AG04449 (cell line): ENCODE measurements at regions of chr12 and their contacts with region 1.

Region 1: DNA sequence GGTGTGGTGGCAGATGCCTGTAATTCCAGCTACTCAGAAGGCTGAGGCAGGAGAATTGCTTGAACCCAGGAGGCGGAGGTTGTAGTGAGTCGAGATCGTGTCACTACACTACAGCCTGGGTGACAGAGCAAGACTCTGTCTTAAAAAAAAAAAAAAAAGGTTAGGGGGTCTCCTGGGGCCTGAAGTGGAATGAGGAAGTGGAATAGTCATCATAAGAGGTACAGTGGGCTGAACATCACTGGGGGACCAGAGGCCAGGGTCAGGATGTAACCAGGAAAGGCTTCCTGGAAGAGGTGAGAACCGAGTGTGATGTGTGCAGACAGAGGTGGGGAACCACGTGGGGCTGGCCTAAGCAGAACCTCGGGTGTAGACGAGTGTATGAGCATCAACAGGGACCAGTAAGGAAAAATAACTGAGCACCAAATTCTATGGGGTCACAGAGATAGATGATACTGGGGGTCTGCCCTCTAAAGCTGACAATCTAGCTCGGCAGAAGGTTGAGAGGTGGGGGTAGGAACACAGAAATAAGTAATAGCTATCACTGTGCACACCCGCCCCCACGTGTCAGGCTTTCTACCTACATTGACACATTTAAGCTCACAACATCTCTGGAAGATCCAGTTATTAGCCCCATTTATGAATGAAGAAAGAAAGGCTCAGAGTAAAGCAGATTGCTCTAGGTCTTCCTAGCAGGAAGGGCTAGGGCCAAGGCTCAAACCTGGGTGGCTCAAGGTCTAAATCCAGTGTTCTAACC is 5.0 kb upstream of the COX6A1 start:
- DNase-seq: no peak
- H3K4me3 ChIP-seq: no peak overlapping the region
- CTCF ChIP-seq: no peak

Region 2: DNA sequence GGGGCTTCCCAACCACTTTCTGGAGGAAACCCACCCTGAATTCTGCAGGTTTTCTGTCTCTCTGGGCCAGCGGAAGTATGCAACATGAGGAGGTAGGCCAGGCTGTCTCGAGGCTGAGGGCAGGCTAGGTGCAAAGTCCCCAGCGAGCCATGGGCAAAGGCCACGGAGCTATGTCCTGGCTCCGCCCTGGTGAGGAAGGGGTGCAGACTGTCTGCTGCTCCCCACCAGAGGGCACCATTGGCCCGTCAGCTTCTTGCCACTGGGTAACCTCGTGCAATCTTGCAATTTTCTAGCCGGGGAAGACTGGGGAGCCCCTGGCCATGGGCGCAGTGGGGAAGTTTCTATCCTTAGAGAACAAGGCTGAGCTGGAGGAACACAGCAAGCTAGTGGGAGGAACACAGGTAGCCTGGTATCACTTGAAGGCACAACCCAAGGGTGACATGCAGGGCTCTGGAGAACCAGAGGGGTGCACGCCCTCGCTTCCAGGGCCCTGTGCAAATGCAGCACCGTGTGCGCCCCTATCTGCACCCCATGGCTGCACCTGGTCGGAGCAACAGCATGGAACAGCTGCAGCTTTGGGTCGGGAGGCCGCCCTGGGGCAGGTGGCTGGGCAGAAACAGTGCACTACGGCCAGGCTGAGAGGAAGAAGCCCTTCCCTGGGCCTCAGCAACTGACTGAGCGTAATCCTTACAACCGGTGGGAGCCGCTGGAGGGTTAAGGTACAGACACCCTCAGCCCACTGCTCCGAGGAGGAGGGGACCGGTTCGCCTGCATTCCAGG is 204.5 kb before region 1 on chr12:
- CTCF ChIA-PET with region 1: no interaction called
- POLR2A ChIA-PET with region 1: no interaction called
- DNase-seq: no peak
- H3K4me3 ChIP-seq: peak overlapping the region; percentile 4; the same call in 1 of the 2 replicates
- CTCF ChIP-seq: peak; percentile 94

Region 3: DNA sequence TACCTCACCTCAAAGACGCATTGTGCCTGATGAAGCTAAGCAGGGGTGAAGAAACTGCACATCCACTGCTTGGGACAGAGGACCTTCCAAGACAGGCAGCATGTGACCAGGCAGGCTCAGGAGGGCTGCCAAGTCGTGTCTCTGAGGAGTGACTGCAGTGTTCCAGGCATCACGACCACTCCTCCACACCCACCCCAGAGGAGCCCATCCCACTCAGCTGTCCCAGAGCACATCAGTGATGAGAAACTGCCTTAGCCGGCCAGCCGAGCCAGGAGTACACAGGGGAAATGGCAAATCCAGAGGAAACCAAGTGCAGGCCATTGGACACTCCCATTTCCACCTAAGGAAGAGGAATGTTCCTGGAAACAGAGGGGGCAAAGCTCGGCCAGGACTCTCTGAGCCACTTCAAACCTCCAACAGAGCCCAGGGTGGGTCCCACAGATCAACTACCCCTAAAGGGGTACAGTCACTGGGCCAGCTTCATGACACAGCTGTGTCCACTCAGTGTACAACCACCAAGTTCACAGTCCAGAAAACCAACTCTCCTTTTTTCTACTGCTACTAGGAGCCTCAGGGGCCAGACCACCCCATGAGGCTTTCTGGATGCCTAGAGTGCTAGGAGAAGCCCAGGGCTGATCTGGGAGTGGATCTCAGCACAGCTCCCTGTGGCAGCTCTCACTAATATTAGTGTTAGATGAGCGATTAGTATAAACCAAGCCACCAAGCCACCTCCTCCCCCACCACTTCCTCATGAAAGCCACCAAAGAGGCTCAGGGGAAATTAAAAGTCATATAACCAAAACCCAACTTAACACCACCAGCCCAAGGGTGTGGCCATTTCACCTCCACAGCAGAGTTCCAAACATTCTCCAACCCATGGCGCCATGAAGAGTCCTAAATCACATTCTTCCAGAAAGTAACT is 182.8 kb before region 1 on chr12:
- CTCF ChIA-PET with region 1: no interaction called
- POLR2A ChIA-PET with region 1: no interaction called
- DNase-seq: no peak
- H3K4me3 ChIP-seq: no peak overlapping the region
- CTCF ChIP-seq: no peak

Region 4: DNA sequence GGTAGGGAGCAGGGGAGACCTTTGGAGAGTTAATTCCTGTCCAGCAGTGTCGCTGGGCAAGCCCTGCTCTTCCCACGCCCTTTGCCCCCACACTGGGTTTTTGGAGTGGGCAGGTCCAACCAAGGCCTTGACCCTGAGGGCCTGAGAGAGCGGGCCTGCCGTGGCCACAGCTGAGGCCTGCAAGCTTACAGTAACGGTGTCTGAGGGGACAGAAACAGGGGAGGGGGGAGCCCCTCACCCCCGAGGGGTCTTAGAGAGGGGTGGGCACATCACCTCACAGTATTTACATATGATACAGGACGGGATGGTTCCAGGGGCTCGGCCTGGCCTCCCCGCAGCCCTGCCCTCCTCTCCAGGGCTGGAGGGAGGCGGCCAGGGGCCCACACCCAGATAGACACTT is 90.8 kb before region 1 on chr12:
- CTCF ChIA-PET with region 1: interaction called, 19 read pairs
- POLR2A ChIA-PET with region 1: no interaction called
- DNase-seq: no peak
- H3K4me3 ChIP-seq: no peak overlapping the region
- CTCF ChIP-seq: no peak

Region 5: GRCh38 chr12:120367233-120367923 is 65.6 kb before region 1 on chr12:
- CTCF ChIA-PET with region 1: interaction called, 160 read pairs
- POLR2A ChIA-PET with region 1: interaction called, 3 read pairs
- DNase-seq: no peak
- H3K4me3 ChIP-seq: no peak overlapping the region
- CTCF ChIP-seq: peak; percentile 19

Region 6: GRCh38 chr12:120416490-120417216 is 16.3 kb before region 1 on chr12:
- CTCF ChIA-PET with region 1: interaction called, 31 read pairs
- POLR2A ChIA-PET with region 1: no interaction called
- DNase-seq: no peak
- H3K4me3 ChIP-seq: no peak overlapping the region
- CTCF ChIP-seq: no peak

Region 7: GRCh38 chr12:120445911-120446843 is 13.2 kb after region 1 on chr12 and contains the starts of genes GATC and TRIAP1:
- CTCF ChIA-PET with region 1: interaction called, 17 read pairs
- POLR2A ChIA-PET with region 1: interaction called, 3 read pairs
- DNase-seq: no peak
- H3K4me3 ChIP-seq: peak within 1 kb of the TSS; percentile 100
- CTCF ChIP-seq: no peak